Activated CD4-positive, alpha-beta memory T cell treated with anti-CD3 and anti-CD28 coated beads for 36 hours (primary cell): ENCODE measurements at regions of chr12 and their contacts with region 1.

Region 1: DNA sequence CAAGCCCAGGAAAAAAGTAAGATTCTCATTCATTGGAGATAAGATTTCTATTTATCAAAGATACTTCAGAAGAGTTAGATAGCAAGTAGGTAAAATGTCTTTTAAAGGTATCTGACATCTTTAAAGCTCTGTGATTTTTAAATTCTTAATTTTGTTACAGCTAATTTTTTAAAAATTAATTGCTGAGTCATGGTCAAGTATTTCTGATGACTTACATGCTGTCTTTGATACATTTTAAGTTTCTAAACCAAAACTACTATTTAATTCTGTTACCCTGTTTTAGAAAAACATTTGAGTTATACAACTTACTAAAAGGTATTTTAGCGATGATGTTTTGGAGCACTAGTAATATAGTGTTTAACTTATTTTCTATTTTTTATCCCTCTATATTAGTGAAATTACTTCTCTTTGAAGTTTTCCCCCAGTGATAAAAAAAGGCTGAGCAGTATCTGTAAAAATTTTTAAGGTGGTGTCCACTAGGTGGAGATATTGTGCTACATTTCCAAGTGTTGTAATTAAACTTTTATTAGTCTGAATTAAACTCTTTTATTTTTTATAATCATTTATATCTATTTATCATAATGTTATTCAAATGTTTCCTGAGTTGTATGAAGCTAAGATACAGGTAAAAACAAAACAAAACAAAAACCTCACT is 11.5 kb downstream of the ALG10 start:
- DNase-seq: no peak
- H3K4me3 Mint-ChIP-seq: no peak overlapping the region
- H3K27ac Mint-ChIP-seq: no peak overlapping the region
- H3K4me1 Mint-ChIP-seq: no peaks in the 10 kb centered on the region
- H3K27me3 Mint-ChIP-seq: no peaks in the 10 kb centered on the region

Region 2: DNA sequence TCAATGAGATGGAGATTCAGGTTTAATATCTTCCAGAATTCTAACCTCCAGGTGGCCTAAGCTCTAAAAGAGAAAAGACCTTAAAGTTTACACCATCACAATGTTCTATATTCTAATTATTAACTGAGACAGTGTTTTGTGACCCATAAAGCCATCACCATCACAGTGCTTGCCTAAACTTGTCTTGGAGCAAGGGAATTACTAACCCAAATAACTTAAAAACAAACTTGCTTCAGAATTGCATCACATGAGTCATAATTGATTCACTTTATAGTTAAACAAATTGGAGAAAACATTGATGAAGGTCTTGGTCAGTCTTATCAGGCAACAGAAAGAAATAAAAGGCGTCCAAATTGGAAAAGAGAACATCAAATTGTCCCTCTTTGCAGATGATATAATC is 66.0 kb before region 1 on chr12:
- CTCF ChIA-PET with region 1: no interaction called
- POLR2A ChIA-PET with region 1: no interaction called
- intact Hi-C with region 1: no loop called
- DNase-seq: no peak
- H3K4me3 Mint-ChIP-seq: no peak overlapping the region
- H3K27ac Mint-ChIP-seq: no peak overlapping the region
- H3K4me1 Mint-ChIP-seq: no peaks in the 10 kb centered on the region
- H3K27me3 Mint-ChIP-seq: peaks cover 1% of the 10 kb centered on the region

Region 3: GRCh38 chr12:34108405-34108803 is 74.6 kb after region 1 on chr12:
- CTCF ChIA-PET with region 1: no interaction called
- POLR2A ChIA-PET with region 1: no interaction called
- intact Hi-C with region 1: no loop called
- DNase-seq: no peak
- H3K4me3 Mint-ChIP-seq: no peak overlapping the region
- H3K27ac Mint-ChIP-seq: no peak overlapping the region
- H3K4me1 Mint-ChIP-seq: no peaks in the 10 kb centered on the region
- H3K27me3 Mint-ChIP-seq: peaks cover 18% of the 10 kb centered on the region

Region 4: DNA sequence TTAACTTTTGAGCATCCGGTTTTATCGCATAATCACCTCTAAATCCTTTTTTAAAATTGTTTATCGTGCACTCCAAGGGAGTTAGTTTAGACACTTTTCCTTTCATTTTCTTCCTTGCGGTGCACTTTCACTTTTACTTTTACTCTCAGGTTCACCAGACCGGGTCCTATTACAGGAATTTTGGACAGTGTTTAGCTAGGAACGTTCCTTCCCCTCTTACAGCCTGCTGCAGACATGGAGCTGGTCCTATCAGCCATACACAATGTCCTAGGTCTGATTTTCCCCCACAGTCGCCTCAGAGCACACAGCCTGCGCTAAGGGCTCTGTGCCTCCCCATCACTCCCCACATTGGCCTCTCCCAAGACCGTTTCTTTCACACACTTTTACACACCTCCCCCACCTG is 92.5 kb after region 1 on chr12:
- CTCF ChIA-PET with region 1: interaction called, 3 read pairs
- POLR2A ChIA-PET with region 1: no interaction called
- intact Hi-C with region 1: loop called (anchors 5 kb)
- DNase-seq: no peak
- H3K4me3 Mint-ChIP-seq: peak overlapping the region; percentile 9
- H3K27ac Mint-ChIP-seq: no peak overlapping the region
- H3K4me1 Mint-ChIP-seq: peaks cover 8% of the 10 kb centered on the region
- H3K27me3 Mint-ChIP-seq: peaks cover 17% of the 10 kb centered on the region

Region 5: GRCh38 chr12:34218165-34219045 is 184.7 kb after region 1 on chr12:
- CTCF ChIA-PET with region 1: interaction called, 3 read pairs
- POLR2A ChIA-PET with region 1: no interaction called
- intact Hi-C with region 1: loop called (anchors 1 kb)
- DNase-seq: peak; percentile 73
- H3K4me3 Mint-ChIP-seq: peak overlapping the region; percentile 56
- H3K27ac Mint-ChIP-seq: no peak overlapping the region
- H3K4me1 Mint-ChIP-seq: peaks cover 2% of the 10 kb centered on the region
- H3K27me3 Mint-ChIP-seq: peaks cover 2% of the 10 kb centered on the region

Region 6: DNA sequence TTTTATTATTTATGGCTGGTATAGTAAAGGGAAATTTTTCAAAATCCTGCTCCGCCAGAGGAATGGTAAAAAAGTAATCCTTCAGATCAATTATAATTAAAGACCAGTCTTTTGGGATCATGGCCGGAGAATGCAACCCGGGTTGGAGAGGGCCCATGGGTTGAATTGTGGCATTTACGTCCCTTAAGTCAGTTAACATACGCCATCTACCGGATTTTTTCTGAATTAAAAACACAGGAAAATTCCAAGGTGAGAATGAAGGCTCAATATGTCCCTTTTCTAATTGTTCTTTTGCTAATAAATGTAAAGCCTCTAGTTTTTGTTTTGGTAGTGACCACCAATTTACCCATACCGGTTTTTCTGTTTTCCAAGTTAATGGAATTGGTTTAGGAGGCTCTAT is 591.4 kb after region 1 on chr12:
- CTCF ChIA-PET with region 1: no interaction called
- POLR2A ChIA-PET with region 1: no interaction called
- intact Hi-C with region 1: loop called (anchors 10 kb)
- DNase-seq: no peak
- H3K4me3 Mint-ChIP-seq: no peak overlapping the region
- H3K27ac Mint-ChIP-seq: no peak overlapping the region
- H3K4me1 Mint-ChIP-seq: no peaks in the 10 kb centered on the region
- H3K27me3 Mint-ChIP-seq: no peaks in the 10 kb centered on the region